Activated CD4-positive, alpha-beta memory T cell treated with anti-CD3 and anti-CD28 coated beads for 36 hours (primary cell): ENCODE measurements at regions of chr1 and their contacts with region 1.

Region 1: DNA sequence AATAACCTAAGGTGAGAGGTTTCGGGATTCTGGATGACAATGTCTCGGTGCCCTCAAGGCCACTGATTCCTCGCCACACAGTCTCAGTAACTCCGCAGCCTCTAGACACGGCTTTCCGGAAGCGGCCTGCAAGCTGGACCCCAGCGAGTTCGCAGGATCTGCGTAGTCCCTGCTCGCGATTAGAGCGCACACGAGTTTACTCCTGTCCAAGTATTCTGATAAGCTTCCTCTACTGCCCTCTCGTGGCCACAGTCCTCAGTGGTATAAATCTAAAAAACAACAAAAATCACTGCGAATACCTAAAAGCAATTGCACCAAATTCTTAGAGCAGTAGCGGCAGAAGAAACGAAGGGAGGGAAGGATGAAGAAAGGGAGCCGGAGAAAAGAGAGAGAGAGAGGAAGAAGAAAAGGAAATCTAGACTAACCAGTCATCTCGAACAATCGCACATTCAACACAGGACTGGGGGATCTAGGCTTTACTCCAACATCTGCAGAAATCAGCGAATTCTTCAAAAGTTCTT is 1.1 kb upstream of the PLXNA2 start:
- DNase-seq: peak; percentile 84
- H3K4me3 Mint-ChIP-seq: peak overlapping the region; percentile 65
- H3K27ac Mint-ChIP-seq: no peak overlapping the region
- H3K4me1 Mint-ChIP-seq: peaks cover 10% of the 10 kb centered on the region
- H3K27me3 Mint-ChIP-seq: peaks cover 21% of the 10 kb centered on the region

Region 2: DNA sequence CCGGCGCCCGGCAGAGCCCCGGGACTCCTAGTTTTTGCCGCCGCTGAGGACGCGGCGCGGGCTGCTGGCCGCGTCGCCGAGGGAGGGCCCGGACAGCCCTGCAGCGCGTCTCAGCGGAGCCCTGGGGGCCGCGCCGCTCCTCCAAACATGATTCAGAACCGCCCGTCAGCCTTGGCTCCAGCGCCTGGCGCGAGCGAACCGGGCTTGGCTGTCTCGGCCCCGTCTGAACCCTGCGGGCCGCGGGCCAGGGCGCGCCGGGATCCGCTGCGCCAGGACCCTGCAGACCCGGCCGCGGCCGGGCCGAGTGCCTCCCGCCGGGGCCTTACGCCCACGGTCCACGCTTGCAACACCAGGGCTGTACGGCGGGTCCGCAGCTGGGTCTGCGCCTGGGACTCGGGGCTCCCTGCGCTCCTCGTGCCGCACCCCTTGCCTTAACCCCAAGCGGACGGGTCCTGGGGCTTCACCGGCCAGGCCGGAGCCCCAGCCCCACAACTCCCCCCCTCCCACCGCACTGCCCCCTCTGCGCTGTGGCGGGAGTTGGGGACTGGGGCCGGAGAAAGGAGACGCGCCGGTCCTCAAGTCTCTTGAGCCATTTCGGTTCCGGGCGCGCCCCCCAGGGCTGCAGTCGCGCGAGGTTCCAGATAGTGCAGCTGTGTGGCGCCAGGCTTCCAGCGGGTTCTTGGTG is 286.0 kb before region 1 on chr1:
- CTCF ChIA-PET with region 1: no interaction called
- POLR2A ChIA-PET with region 1: no interaction called
- intact Hi-C with region 1: no loop called
- DNase-seq: peak; percentile 47
- H3K4me3 Mint-ChIP-seq: peak overlapping the region; percentile 63
- H3K27ac Mint-ChIP-seq: no peak overlapping the region
- H3K4me1 Mint-ChIP-seq: peaks cover 9% of the 10 kb centered on the region
- H3K27me3 Mint-ChIP-seq: peaks cover 46% of the 10 kb centered on the region

Region 3: GRCh38 chr1:208029381-208030287 is 215.6 kb before region 1 on chr1:
- CTCF ChIA-PET with region 1: interaction called, 157 read pairs
- POLR2A ChIA-PET with region 1: no interaction called
- intact Hi-C with region 1: no loop called
- DNase-seq: no peak
- H3K4me3 Mint-ChIP-seq: no peak overlapping the region
- H3K27ac Mint-ChIP-seq: no peak overlapping the region
- H3K4me1 Mint-ChIP-seq: no peaks in the 10 kb centered on the region
- H3K27me3 Mint-ChIP-seq: no peaks in the 10 kb centered on the region

Region 4: GRCh38 chr1:208132287-208132883 is 112.9 kb before region 1 on chr1:
- CTCF ChIA-PET with region 1: interaction called, 57 read pairs
- POLR2A ChIA-PET with region 1: no interaction called
- intact Hi-C with region 1: loop called (anchors 1 kb)
- DNase-seq: peak; percentile 76
- H3K4me3 Mint-ChIP-seq: no peak overlapping the region
- H3K27ac Mint-ChIP-seq: no peak overlapping the region
- H3K4me1 Mint-ChIP-seq: peaks cover 8% of the 10 kb centered on the region
- H3K27me3 Mint-ChIP-seq: peaks cover 18% of the 10 kb centered on the region

Region 5: GRCh38 chr1:208374391-208374941 is 129.2 kb after region 1 on chr1:
- CTCF ChIA-PET with region 1: no interaction called
- POLR2A ChIA-PET with region 1: no interaction called
- intact Hi-C with region 1: no loop called
- DNase-seq: no peak
- H3K4me3 Mint-ChIP-seq: no peak overlapping the region
- H3K27ac Mint-ChIP-seq: no peak overlapping the region
- H3K4me1 Mint-ChIP-seq: no peaks in the 10 kb centered on the region
- H3K27me3 Mint-ChIP-seq: peaks cover 10% of the 10 kb centered on the region